ENCODE measurements at regions of chr13 and their contacts with region 1.

Region 1: GRCh38 chr13:49792550-49793324 is at the start of gene KPNA3:
- DNase-seq: peak; percentile 97
- H3K4me3 Mint-ChIP-seq: peak within 1 kb of the TSS; percentile 95
- H3K27ac Mint-ChIP-seq: peak within 1 kb of the TSS; percentile 98
- H3K4me1 Mint-ChIP-seq: peaks cover 35% of the 10 kb centered on the region
- H3K27me3 Mint-ChIP-seq: no peaks in the 10 kb centered on the region
- total RNA-seq, gene KPNA3: 34.2 to 41.6 TPM

Region 2: GRCh38 chr13:49669735-49670309 is 122.9 kb before region 1 on chr13:
- CTCF ChIA-PET with region 1: no interaction called
- POLR2A ChIA-PET with region 1: no interaction called
- DNase-seq: peak; percentile 30
- H3K4me3 Mint-ChIP-seq: no peak overlapping the region
- H3K27ac Mint-ChIP-seq: no peak overlapping the region
- H3K4me1 Mint-ChIP-seq: no peaks in the 10 kb centered on the region
- H3K27me3 Mint-ChIP-seq: no peaks in the 10 kb centered on the region

Region 3: DNA sequence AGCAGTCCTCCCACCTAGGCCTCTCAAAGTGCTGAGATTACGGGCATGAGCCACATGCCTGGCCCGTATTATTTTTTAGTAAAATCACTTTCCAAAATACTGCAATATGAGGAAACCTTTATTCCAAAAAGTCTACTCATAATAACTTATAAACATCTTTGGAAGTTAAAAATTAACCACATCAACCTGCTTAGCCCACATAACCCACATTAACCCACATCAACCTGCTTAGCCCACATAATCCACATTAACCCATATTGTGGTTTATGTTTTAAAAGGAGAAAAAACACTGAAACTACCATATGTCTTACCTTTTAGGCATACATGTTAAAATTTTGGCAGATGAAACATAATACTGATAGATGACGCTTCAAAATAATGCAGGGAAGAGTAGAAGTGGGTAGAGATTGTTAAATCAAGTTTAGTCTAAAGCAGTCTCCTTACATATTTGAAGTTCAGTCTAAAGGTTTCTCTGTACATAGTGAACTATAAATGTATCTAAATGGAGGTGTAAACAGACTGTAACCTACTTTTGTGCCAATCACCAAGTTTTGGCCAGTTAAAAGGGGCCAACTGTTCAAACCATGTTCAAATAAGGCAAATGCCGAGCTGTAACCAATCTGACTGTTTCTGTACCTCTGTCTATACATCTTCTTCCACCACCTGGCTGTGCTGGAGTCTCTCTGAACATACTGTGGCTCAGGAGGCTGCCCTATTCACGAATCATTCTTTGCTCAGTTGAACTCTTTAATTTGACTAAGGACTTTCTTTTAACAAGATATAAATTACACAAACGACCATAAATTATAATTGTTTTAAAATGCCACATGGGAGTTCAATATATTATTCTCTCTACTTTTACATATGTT is 14.8 kb before region 1 on chr13:
- CTCF ChIA-PET with region 1: interaction called, 21 read pairs
- POLR2A ChIA-PET with region 1: no interaction called
- DNase-seq: no peak
- H3K4me3 Mint-ChIP-seq: peak overlapping the region; percentile 17
- H3K27ac Mint-ChIP-seq: peak overlapping the region; percentile 27
- H3K4me1 Mint-ChIP-seq: peaks cover 12% of the 10 kb centered on the region
- H3K27me3 Mint-ChIP-seq: no peaks in the 10 kb centered on the region